OCI-LY7 (cell line): ENCODE measurements at regions of chr13 and their contacts with region 1.

Region 1: DNA sequence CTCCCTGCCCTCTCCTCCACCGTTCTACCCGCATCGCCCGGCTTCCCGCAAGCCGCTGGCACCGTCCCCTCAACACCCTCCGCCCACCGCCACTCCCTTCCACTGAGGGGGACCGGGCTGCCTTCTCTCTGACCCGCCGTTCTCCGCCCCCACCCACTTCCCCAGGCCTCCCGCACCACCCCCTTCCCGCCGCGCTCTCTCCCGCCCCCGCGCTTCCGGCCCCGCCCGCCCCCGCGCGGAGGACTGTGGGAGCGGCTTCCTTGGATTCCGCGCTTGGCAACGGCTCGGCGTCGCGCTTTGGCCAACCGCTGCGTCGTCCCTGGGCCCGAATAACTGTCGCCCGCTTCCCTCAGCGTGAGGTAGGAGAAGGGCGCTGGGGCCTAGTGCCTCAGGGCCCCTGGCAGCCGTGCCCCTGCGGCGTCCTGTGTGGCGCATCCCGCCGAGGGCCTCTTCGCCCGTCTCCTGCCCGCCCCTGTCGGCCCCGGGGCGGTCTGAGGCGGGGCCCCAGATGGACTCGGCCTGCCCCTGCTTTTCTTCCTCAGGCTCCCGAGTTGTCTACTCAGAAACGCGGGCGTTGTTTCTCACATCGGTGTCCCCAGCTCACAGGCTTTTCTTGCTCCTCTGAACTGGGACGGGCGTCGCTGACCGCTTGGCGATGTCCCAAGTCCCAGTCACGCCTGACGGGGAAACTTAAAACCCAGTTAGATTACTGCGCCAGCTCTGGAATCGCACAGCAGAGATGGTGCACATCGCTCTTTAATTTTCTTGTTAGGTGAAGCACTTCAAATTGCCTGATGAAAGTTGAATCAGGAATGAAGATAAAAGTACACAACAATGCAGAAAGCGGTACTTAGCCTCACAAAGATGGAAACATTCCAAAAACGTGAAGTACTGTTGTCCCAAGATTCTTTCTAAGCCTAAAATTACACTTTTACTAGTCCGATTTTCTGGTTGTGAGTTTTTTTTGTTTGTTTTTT is at the start of gene IFT88:
- DNase-seq: peak; percentile 86
- H3K4me3 ChIP-seq: peak within 1 kb of the TSS; percentile 80
- H3K27ac ChIP-seq: peak within 1 kb of the TSS; percentile 53
- H3K4me1 ChIP-seq: peaks cover 4% of the 10 kb centered on the region
- CTCF ChIP-seq: no peak
- total RNA-seq, gene IFT88: 6.7 and 6.9 TPM in 2 replicates

Region 2: DNA sequence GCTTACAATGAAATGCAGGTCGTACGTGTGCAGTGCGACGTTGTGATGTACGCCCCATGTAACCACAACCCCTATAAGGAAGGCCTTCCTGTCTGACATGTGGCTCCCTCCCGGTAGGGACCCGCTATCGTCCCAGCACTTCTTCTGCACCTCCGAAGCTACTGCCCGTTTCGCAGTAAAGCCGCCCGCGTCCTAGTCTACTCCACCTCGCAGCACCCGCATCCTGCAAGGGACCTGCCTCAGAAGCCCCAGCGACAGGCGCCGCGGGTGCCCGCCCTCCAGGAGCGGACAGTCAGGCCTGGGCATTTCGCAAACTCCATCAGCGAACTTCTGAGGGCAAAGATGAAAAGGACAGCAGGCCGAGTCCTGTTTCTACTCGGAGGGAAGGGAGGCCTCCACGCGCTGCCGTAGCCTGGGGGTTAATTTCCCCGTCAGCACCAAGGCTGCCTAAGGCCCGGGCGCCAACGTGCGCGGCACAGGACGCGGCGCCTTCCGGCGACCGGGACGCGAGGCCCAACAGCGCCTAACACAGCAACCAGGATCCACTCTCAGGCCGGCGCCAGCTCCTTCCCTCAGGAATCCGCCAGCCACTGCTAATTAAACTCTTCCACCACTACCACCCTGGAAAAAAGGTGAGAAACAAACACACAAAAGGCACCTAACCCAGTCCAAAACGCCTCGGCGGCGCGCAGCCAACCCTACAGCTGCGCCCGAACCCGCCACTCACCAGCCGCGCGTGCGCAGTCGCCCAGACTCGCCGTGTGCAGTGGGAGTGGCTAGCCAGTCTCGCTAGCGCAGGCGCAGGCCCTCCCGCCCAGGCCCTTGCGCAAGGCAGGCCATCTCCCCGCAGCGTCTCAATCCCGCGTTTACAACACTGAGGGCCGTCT is 206.3 kb after region 1 on chr13 and contains the start of gene EEF1AKMT1:
- CTCF ChIA-PET with region 1: no interaction called
- POLR2A ChIA-PET with region 1: no interaction called
- intact Hi-C with region 1: loop called (anchors 5 kb)
- DNase-seq: peak; percentile 86
- H3K4me3 ChIP-seq: peak within 1 kb of the TSS; percentile 65
- H3K27ac ChIP-seq: peak within 1 kb of the TSS; percentile 69
- H3K4me1 ChIP-seq: peaks cover 8% of the 10 kb centered on the region
- CTCF ChIP-seq: no peak
- total RNA-seq, gene EEF1AKMT1: 1.3 and 2.5 TPM in 2 replicates